ENCODE measurements at regions of chr1 and their contacts with region 1.

Region 1: GRCh38 chr1:175373786-175374623 is 181.4 kb upstream of the KIAA0040 start:
- DNase-seq: peak; percentile 51
- H3K4me3 ChIP-seq: no peak overlapping the region
- H3K27ac ChIP-seq: no peak overlapping the region
- H3K4me1 ChIP-seq: no peaks in the 10 kb centered on the region
- H3K27me3 ChIP-seq: no peaks in the 10 kb centered on the region
- CTCF ChIP-seq: peak; percentile 75

Region 2: DNA sequence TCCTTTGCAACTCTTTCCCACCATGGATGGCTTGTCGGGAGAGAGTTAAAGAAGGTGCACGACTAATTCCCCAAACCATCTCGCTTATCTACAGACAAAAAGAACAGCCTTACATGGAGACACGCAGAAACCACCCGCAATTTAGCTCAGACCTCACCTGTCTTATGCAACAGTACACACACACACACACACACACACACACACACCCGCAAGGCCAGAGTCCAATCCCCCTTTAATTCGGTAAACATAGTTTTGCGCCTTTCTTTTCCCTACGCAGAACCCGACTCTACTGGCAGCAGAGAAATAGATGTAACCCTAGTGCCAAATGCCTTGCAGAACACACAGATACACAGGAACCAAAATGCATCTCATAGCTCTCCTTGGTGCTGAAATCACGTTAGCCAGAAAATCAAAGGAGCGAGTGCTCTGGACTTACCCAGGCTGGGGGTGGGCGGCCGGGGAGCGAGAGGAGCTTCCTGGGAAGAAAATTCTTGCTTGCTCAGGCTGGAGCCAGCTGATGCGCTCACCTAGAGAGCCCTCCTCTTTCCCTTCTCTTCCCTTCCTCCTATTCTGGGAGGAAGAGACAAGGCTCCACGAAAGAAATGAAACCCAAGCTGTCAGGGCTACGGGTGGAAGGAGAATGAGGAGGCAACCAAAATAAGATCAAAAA is 368.9 kb after region 1 on chr1:
- CTCF ChIA-PET with region 1: interaction called, 3 read pairs
- POLR2A ChIA-PET with region 1: no interaction called
- intact Hi-C with region 1: loop called (anchors 5 kb)
- DNase-seq: peak; percentile 59
- H3K4me3 ChIP-seq: no peak overlapping the region
- H3K27ac ChIP-seq: no peak overlapping the region
- H3K4me1 ChIP-seq: no peaks in the 10 kb centered on the region
- H3K27me3 ChIP-seq: peaks cover 21% of the 10 kb centered on the region
- CTCF ChIP-seq: no peak

Region 3: GRCh38 chr1:175887981-175888433 is 514.0 kb after region 1 on chr1:
- CTCF ChIA-PET with region 1: no interaction called
- POLR2A ChIA-PET with region 1: no interaction called
- intact Hi-C with region 1: loop called (anchors 10 kb)
- DNase-seq: peak; percentile 70
- H3K4me3 ChIP-seq: no peak overlapping the region
- H3K27ac ChIP-seq: no peak overlapping the region
- H3K4me1 ChIP-seq: no peaks in the 10 kb centered on the region
- H3K27me3 ChIP-seq: no peaks in the 10 kb centered on the region
- CTCF ChIP-seq: peak; percentile 86

Region 4: DNA sequence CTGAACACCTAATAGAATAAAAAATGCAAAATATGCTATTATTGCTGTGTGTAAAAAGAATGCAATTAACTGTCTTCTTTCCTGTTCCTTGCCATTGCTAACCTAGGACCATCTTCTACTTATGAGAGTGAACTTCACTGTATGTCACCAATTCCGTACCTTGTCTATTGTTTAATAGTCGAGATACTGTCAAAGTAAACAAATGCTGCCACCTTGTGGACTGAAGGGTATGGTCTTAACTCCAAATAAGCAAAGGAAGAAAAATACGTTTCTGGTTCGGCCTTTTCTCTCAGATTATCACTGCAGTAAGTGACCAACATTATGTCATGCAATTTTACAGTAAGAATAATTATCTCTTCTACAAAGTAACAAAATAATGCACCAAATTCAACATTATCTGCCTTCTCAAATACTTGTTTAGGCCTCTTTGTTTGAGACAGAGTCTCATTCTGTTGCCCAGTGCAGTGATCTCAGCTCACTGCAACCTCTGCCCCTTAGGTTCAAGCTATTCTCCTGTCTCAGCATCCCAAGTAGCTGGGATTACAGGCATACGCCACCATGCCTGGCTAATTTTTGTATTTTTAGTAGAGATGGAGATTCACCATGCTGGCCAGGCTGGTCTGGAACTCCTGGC is 699.6 kb after region 1 on chr1:
- CTCF ChIA-PET with region 1: no interaction called
- POLR2A ChIA-PET with region 1: no interaction called
- intact Hi-C with region 1: loop called (anchors 2 kb)
- DNase-seq: peak; percentile 77
- H3K4me3 ChIP-seq: no peak overlapping the region
- H3K27ac ChIP-seq: no peak overlapping the region
- H3K4me1 ChIP-seq: no peaks in the 10 kb centered on the region
- H3K27me3 ChIP-seq: no peaks in the 10 kb centered on the region
- CTCF ChIP-seq: peak; percentile 77

Region 5: GRCh38 chr1:176374967-176375569 is 1001.1 kb after region 1 on chr1:
- CTCF ChIA-PET with region 1: no interaction called
- POLR2A ChIA-PET with region 1: no interaction called
- intact Hi-C with region 1: loop called (anchors 10 kb)
- DNase-seq: peak; percentile 75
- H3K4me3 ChIP-seq: no peak overlapping the region
- H3K27ac ChIP-seq: no peak overlapping the region
- H3K4me1 ChIP-seq: no peaks in the 10 kb centered on the region
- H3K27me3 ChIP-seq: no peaks in the 10 kb centered on the region
- CTCF ChIP-seq: peak; percentile 90

Measured in A673 (cell line).